Dorsolateral prefrontal cortex (tissue), 120 donors: ENCODE measurements at regions of chr5 and their contacts with region 1.

Region 1: DNA sequence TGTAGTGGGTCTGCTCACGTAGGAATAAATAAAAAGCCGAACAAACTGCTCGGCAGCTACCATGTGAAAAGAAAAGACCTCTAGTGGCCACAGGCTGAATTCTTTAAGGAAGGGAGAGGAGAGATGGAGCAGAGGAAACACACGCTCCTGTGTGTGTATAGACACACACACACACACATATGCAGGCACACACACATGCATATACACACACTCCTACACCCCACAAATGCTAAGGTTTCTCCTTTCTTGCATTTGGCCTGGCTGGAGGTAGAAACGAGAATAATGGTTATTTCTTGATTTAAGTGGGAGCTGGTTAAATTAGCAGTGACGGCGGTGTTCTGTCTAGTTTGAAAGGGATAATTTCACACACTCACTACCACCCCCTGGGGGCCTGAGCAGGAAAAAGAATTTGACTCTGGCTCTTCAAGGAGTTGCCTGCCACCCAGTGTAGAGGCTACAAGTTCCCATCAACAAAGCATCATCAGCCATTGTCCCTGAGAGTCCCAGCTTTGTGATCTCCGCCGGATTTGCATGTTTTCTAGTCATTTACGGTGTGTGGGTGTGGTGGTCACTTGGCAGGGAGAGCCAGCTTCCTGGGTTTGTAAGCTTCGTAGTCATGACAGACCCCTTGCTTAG is at the start of gene INSYN2B:
- DNase-seq: peak; percentile 45 to 95 (median 86)
- H3K4me3 ChIP-seq: peak within 1 kb of the TSS; percentile 29 to 81 (median 62)
- H3K27ac ChIP-seq: peak within 1 kb of the TSS in 54 of 59 donors; percentile 18 to 89 (median 68)
- H3K27me3 ChIP-seq: no peaks in the 10 kb centered on the region
- CTCF ChIP-seq: peak; percentile 65 to 97 (median 86)
- total RNA-seq, gene INSYN2B: 3.2 to 17.3 (median 6.9) TPM

Region 2: GRCh38 chr5:169701910-169702451 is 278.6 kb before region 1 on chr5:
- intact Hi-C with region 1: loop called (anchors 1 to 2 kb)
- DNase-seq: no peak
- H3K4me3 ChIP-seq: no peak overlapping the region
- H3K27ac ChIP-seq: peak overlapping the region in 1 of 59 donors; percentile 59
- H3K27me3 ChIP-seq: peaks cover 0 to 3% (median 0%) of the 10 kb centered on the region in 45 donors
- CTCF ChIP-seq: peak in 55 of 56 donors; percentile 17 to 84 (median 66)

Region 3: GRCh38 chr5:169856571-169856970 is 124.0 kb before region 1 on chr5:
- intact Hi-C with region 1: no loop called
- DNase-seq: no peak
- H3K4me3 ChIP-seq: no peak overlapping the region
- H3K27ac ChIP-seq: no peak overlapping the region
- H3K27me3 ChIP-seq: no peaks in the 10 kb centered on the region
- CTCF ChIP-seq: no peak

Region 4: DNA sequence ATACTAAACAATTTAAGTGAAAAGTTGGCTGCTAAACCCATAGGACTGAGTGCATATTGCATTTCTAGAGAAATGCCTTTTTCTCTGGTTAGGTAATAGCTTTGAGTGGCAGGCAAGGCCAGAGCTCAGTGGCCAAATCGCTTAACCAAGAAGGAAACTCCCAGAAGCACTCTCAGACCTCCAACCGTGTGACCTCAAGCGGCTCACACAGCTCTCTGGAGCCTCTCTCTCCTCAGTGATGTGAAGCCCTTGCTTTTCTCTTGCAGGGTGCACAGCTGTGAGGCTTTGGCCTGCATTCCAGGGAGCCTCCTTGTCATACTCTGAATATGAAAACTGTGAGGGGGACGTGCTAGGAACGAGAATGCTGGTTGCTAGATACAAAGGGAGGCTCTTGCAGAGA is 106.9 kb before region 1 on chr5:
- intact Hi-C with region 1: loop called in 1 of 2 experiments (anchors 5 kb)
- DNase-seq: peak in 9 of 10 donors; percentile 6 to 77 (median 61)
- H3K4me3 ChIP-seq: no peak overlapping the region
- H3K27ac ChIP-seq: peak overlapping the region in 57 of 59 donors; percentile 3 to 86 (median 71)
- H3K27me3 ChIP-seq: no peaks in the 10 kb centered on the region
- CTCF ChIP-seq: peak in 1 of 56 donors; percentile 21

Region 5: DNA sequence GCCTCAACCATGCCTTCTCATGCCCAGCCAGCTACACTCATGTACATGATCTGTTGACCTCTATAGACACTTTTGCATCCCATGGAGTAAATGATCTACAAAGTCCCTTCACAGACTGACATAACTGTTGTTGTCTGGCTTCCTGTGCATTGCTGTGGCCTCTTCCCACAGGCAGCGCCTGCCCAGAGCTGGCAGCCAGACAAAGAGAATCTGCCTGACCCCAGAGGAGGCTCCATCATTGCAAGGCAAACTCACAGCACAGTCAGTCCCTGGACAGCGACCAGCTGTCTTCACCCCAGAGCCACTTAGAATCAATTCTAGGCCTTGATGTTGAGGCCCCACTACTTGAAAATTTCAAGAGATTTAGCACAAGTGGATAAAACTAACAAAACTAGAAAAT is 65.8 kb before region 1 on chr5:
- intact Hi-C with region 1: loop called in 1 of 2 experiments (anchors 2 kb)
- DNase-seq: peak; percentile 13 to 86 (median 63)
- H3K4me3 ChIP-seq: no peak overlapping the region
- H3K27ac ChIP-seq: peak overlapping the region in 49 of 59 donors; percentile 0 to 88 (median 66)
- H3K27me3 ChIP-seq: no peaks in the 10 kb centered on the region
- CTCF ChIP-seq: peak in 9 of 56 donors; percentile 12 to 46 (median 21)

Region 6: GRCh38 chr5:169956756-169957155 is 23.8 kb before region 1 on chr5:
- intact Hi-C with region 1: no loop called
- DNase-seq: no peak
- H3K4me3 ChIP-seq: no peak overlapping the region
- H3K27ac ChIP-seq: peak overlapping the region in 4 of 59 donors; percentile 2 to 36 (median 3)
- H3K27me3 ChIP-seq: no peaks in the 10 kb centered on the region
- CTCF ChIP-seq: no peak

Region 7: DNA sequence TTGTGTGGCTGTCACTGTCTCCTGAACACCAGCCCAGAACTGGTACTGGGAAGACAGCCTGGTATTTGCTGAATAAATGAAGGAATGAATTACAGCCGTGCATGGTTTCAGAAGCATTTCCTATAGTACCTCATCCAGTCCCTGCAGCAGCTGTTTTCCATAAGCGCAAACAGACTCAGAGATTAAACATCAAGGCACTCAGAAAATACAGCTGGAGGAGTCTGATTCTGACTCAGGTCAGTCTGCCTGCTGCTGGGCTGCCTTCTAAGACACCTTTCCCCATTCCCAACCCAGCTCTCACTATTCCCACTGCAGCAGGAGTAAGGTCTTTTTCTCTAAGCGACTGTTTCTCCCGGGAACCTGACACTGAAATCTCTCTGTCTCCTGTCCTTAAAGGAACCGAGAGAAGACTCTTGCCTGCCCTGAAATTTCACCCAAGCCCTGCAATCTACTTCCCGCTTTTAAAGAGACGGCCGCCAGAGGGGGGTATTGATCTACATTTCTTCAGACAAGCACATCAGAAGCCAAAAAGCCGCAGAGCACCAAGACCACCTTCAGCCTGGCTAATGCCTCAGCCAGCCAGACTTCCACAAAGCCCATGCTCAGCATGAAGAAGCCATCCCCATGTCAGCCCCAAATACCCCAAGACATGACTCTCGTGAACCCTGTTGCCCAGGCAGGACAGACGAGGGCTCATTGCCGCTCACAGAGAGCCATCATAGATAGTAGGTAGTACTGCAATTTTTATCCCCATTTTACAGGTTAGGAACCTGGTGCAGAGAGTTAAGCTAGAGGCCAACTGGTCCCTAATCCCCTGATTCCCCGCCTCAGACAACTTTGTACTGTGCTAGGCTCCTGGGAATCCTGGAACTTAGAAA is 119.8 kb after region 1 on chr5:
- intact Hi-C with region 1: no loop called
- DNase-seq: peak; percentile 49 to 89 (median 74)
- H3K4me3 ChIP-seq: no peak overlapping the region
- H3K27ac ChIP-seq: no peak overlapping the region
- H3K27me3 ChIP-seq: peaks cover 0 to 3% (median 0%) of the 10 kb centered on the region in 45 donors
- CTCF ChIP-seq: peak; percentile 42 to 87 (median 74)

Region 8: DNA sequence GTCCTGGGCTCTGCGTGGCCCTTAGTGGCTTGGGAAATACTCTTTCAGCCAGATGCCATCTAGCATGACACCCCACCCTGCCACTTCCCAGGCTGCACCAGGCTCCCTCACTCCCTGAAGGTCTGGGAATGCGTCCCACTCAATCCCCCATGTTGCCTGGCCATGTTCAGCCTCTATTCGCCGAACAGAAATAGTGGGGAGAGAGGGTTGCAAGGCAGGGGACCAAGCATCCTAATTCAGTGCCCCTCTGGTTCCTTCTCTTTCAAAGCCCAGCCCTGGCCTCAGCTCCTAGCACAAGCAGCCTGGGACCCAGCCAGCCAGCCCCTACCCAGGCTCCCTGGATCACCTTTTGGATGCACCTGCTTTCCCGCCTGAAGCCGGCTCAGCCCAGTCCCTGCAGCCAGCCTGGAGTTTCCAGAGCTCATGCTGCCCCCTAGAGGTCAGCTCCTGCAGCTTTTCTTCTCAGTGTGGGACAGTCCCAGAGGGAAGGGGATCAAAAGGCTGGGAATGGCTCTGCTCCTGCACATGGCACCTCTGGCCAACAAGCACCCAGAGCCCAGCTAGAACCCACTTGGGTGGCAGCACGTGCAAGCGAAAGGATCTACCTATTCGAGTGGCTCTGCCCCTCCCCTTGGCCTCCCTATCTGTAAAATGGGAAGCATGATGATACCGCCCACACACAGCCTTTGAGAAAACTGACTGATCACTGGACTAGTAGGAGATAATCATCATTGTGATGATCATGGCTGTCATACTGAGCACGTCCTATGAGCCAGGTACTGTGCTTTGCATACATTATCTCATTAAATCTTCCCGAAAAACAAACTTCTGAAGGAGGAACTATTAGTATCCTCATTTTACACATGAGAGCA is 203.5 kb after region 1 on chr5:
- intact Hi-C with region 1: loop called in 1 of 2 experiments (anchors 10 kb)
- DNase-seq: peak; percentile 39 to 81 (median 62)
- H3K4me3 ChIP-seq: no peak overlapping the region
- H3K27ac ChIP-seq: no peak overlapping the region
- H3K27me3 ChIP-seq: peaks cover 0 to 10% (median 0%) of the 10 kb centered on the region in 45 donors
- CTCF ChIP-seq: peak; percentile 32 to 88 (median 80)